A673 (cell line): ENCODE measurements at regions of chr9 and their contacts with region 1.

Region 1: GRCh38 chr9:137034863-137035761 is 3.2 kb upstream of the FUT7 start:
- DNase-seq: peak; percentile 89
- H3K4me3 ChIP-seq: peak overlapping the region; percentile 22
- H3K27ac ChIP-seq: no peak overlapping the region
- H3K4me1 ChIP-seq: peaks cover 9% of the 10 kb centered on the region
- H3K27me3 ChIP-seq: no peaks in the 10 kb centered on the region
- CTCF ChIP-seq: peak; percentile 96

Region 2: GRCh38 chr9:136790927-136791641 is 244.0 kb before region 1 on chr9 and contains the start of gene TMEM141:
- CTCF ChIA-PET with region 1: interaction called, 5 read pairs
- POLR2A ChIA-PET with region 1: no interaction called
- intact Hi-C with region 1: loop called (anchors 1 kb)
- DNase-seq: peak; percentile 100
- H3K4me3 ChIP-seq: peak within 1 kb of the TSS; percentile 96
- H3K27ac ChIP-seq: peak within 1 kb of the TSS; percentile 94
- H3K4me1 ChIP-seq: peaks cover 16% of the 10 kb centered on the region
- H3K27me3 ChIP-seq: no peaks in the 10 kb centered on the region
- CTCF ChIP-seq: no peak
- total RNA-seq, gene TMEM141: 32.7 and 39.5 TPM in 2 replicates

Region 3: DNA sequence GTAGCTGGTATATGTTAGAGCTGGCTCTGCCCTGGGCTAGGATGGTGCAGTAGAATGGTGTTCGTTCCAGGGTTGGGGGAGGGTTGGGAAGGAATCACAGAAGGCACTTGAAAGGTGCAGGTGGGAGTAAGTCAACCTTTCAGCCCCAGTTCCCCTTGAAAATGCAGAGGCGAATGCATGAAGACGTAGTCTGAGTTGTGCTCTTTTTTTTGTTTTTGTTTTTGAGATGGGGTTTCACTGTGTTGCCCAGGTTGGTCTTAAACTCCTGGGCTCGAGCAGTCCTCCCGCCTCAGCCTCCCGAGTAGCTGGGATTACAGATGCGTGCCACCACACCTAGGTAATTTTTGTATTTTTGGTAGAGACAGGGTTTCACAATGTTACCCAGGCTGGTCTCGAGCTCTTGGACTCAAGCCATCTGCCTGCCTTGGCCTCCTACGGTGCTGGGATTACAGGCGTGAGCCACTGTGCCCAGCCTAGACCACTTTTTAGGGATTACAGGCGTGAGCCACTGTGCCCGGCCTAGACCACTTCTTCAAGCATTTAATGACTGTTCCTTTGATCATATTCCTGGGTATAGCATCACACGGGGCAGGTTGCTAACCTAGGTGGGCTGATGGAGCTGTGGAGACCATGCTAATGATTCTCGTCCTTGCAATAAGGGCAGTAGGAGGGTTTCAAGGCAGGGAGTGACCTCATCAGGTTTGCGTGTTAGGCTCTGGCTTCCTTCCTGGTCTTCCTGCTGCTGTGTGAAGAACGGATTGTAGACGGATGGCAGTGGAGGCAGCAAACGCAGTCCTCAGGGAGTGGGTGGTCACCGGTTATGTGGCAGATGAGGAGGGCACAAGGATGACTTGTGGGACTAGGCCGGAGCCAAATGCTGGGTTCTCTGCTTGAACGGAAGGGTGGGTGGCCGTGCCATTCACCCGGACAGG is 597.4 kb after region 1 on chr9:
- CTCF ChIA-PET with region 1: no interaction called
- POLR2A ChIA-PET with region 1: no interaction called
- intact Hi-C with region 1: no loop called
- DNase-seq: peak; percentile 41
- H3K4me3 ChIP-seq: no peak overlapping the region
- H3K27ac ChIP-seq: no peak overlapping the region
- H3K4me1 ChIP-seq: peaks cover 10% of the 10 kb centered on the region
- H3K27me3 ChIP-seq: no peaks in the 10 kb centered on the region
- CTCF ChIP-seq: no peak